ENCODE measurements at regions of chr9 and their contacts with region 1.

Region 1: DNA sequence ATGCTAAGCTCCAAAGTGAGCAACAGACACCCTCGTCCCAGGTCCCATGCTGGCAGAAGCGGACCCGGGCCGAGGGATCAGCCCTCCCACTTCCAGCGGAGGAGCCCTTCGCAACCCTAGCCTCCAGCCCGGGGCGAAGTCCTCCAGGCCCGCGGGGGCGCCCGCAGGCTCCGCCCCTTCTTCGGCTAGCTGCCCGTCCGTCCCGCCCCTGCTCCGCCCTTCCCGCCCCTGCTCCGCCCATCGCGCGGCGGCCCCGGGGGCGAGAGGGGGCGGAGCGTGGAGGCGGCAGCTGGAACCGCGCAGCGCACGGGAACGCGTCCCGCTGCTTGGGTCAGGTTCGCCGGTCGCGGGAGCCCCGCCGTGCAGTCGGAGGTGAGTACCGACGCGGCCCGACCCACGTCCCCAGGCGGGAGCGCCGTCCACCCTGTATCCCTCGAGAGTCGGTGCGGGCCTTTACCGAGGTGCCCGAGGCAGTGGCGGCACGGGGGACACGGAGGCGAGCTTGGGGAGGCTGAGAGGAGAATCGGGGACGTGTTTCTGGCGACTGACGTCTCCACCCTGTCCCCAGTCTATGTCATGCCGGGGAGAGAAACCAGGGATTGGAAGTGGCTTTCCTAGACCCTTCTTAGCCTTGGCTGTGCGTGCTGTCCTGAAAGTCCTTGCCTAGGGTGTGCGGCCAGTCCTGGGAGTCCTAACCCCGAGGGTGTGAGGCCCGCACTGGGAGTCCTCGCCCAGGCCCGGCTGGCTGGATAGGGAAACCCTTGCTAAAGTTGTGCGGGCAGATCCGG is at the start of gene ACO1:
- DNase-seq: peak; percentile 89 to 95 (median 94)
- H3K4me3 ChIP-seq: peak within 1 kb of the TSS; percentile 90
- H3K27ac ChIP-seq: peak within 1 kb of the TSS; percentile 47 to 71
- H3K4me1 ChIP-seq: peaks cover 8% of the 10 kb centered on the region
- H3K27me3 ChIP-seq: no peaks in the 10 kb centered on the region
- CTCF ChIP-seq: no peak
- EP300 ChIP-seq: no peak
- POLR2A ChIP-seq: peak; percentile 83
- total RNA-seq, gene ACO1: 21.8 to 46.3 (median 30.5) TPM

Region 2: GRCh38 chr9:32306006-32306405 is 78.6 kb before region 1 on chr9:
- intact Hi-C with region 1: no loop called
- DNase-seq: no peak
- H3K4me3 ChIP-seq: no peak overlapping the region
- H3K27ac ChIP-seq: no peak overlapping the region
- H3K4me1 ChIP-seq: no peaks in the 10 kb centered on the region
- H3K27me3 ChIP-seq: no peaks in the 10 kb centered on the region
- CTCF ChIP-seq: no peak
- EP300 ChIP-seq: no peak
- POLR2A ChIP-seq: no peak

Region 3: DNA sequence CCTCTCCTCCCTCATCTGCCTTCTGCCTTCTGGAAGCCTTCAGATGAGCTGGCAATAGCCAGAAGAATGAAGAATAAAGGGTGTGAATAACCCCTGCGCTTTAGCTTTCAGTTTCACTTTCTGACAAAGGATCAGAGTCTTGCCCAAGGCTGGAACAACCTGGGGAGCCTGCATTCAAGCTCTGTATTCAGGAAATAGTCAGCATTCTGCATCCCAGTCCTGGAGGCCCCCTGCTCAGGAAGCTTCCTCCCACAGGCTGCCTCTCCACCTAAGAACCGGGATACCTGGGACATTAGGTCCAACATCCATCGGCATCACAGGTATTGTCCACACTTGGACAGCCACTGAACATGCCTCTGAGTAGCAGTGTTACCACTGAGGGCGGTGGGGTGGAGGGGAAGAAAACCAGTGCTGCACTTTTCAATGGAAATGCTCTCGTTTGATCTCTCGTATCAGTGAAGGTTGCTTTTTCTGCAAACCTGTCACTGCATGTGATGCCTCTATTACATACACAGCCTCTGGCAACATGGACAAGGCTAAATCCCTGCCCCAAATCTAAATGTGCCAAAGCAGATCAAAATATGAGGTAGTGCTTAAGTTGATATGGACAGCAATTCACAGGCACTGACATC is 39.9 kb before region 1 on chr9:
- intact Hi-C with region 1: no loop called
- DNase-seq: no peak
- H3K4me3 ChIP-seq: no peak overlapping the region
- H3K27ac ChIP-seq: no peak overlapping the region
- H3K4me1 ChIP-seq: no peaks in the 10 kb centered on the region
- H3K27me3 ChIP-seq: no peaks in the 10 kb centered on the region
- CTCF ChIP-seq: no peak
- EP300 ChIP-seq: no peak
- POLR2A ChIP-seq: no peak

Region 4: DNA sequence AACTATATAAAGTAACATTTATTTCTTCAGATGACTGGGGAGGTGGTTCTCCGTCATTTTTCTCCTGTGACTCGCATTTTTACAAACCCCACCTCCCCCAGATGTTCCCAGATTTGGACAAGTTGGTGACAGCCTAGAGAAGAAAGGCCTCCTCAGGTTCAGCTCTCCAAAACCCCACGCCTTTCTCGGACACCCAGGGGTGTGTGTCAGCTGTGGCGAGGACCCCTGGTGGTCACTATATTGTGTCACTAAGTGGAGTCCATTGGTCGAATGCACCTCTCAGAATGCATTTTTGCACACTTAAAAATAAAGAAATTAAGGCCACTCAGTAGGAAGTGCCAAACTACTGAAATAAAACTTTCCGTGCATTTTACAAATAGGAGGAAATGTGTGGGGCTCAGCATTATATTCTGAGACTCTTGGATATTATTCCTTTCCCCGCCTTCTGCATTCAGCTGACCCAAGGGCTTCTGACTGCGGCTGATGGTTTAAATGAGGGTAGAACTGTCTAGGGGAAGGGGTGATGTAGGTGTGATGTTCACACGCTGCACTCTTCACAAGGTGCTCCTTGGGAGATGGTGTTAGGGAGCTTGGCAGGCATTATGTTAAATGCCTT is 47.5 kb after region 1 on chr9:
- intact Hi-C with region 1: loop called in 1 of 4 experiments (anchors 10 kb)
- DNase-seq: peak in 4 of 5 donors; percentile 33 to 57 (median 49)
- H3K4me3 ChIP-seq: no peak overlapping the region
- H3K27ac ChIP-seq: no peak overlapping the region
- H3K4me1 ChIP-seq: peaks cover 5% of the 10 kb centered on the region
- H3K27me3 ChIP-seq: no peaks in the 10 kb centered on the region
- CTCF ChIP-seq: peak in 1 of 3 donors; percentile 17
- EP300 ChIP-seq: no peak
- POLR2A ChIP-seq: no peak

Region 5: GRCh38 chr9:32801530-32801929 is 417.0 kb after region 1 on chr9:
- intact Hi-C with region 1: no loop called
- DNase-seq: no peak
- H3K4me3 ChIP-seq: no peak overlapping the region
- H3K27ac ChIP-seq: no peak overlapping the region
- H3K4me1 ChIP-seq: no peaks in the 10 kb centered on the region
- H3K27me3 ChIP-seq: no peaks in the 10 kb centered on the region
- CTCF ChIP-seq: no peak
- EP300 ChIP-seq: no peak
- POLR2A ChIP-seq: no peak